MCF 10A (cell line): ENCODE measurements at regions of chr11 and their contacts with region 1.

Region 1: GRCh38 chr11:86931548-86932258 is 23.5 kb downstream of the FZD4 start:
- DNase-seq: peak; percentile 61
- H3K4me3 Mint-ChIP-seq: no peak overlapping the region
- H3K27ac Mint-ChIP-seq: no peak overlapping the region
- H3K4me1 Mint-ChIP-seq: peaks cover 12% of the 10 kb centered on the region
- H3K27me3 Mint-ChIP-seq: no peaks in the 10 kb centered on the region
- CTCF ChIP-seq: no peak

Region 2: DNA sequence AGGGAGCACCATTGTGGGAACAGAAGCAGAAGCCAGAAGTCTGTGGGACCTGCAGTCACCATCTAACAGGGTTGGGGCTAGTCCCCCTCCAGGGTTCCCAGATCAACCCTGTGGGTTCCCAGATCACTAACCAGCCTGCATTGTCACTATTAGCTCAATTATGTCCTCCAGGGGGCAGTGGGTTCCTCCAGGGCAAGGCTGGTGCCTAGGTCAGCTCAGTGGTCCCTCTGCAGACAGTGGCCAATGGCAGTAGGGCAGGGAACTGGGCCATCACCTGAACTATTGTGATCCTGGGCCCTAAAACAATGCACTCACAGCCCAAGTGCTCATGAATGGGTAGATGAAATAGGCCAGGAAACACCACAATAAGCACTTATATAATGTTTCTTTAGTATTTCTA is 150.2 kb before region 1 on chr11:
- CTCF ChIA-PET with region 1: no interaction called
- POLR2A ChIA-PET with region 1: no interaction called
- intact Hi-C with region 1: no loop called
- DNase-seq: no peak
- H3K4me3 Mint-ChIP-seq: no peak overlapping the region
- H3K27ac Mint-ChIP-seq: no peak overlapping the region
- H3K4me1 Mint-ChIP-seq: peaks cover 17% of the 10 kb centered on the region
- H3K27me3 Mint-ChIP-seq: no peaks in the 10 kb centered on the region
- CTCF ChIP-seq: no peak

Region 3: DNA sequence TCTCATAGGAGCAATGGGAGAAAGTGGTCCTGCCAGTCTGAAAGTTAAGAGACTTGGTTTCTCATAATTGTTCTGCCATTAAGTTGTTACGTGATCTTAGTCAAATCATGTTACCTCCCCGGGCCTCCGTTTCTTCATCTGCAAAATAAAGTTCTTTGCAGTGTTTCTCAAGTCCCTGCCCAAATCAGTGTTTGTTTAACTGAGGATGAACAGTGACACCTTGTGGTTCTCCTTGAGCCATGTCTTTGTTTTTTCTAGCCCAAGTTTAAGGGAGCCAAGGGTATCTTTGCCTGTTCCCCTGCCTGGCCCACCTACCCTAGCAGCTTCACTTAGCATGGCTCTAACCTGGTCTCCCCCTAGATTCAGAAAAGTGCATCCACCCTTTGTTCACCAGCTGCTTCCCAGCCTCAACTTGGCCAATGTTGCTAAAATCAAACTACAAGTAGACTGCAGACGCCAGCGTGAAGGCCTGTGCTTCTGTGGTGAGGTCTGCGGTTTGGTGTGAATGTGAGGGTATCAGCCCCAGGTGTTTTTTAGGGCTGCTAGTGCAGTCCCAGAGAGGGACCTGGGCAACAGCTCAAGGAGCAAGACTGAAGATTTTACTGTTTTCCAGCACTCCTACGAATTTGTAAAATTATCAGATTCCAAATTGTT is 12.0 kb before region 1 on chr11:
- CTCF ChIA-PET with region 1: interaction called, 21 read pairs
- POLR2A ChIA-PET with region 1: no interaction called
- intact Hi-C with region 1: no loop called
- DNase-seq: peak; percentile 68
- H3K4me3 Mint-ChIP-seq: no peak overlapping the region
- H3K27ac Mint-ChIP-seq: no peak overlapping the region
- H3K4me1 Mint-ChIP-seq: peaks cover 19% of the 10 kb centered on the region
- H3K27me3 Mint-ChIP-seq: no peaks in the 10 kb centered on the region
- CTCF ChIP-seq: peak; percentile 69

Region 4: GRCh38 chr11:86947541-86947940 is 15.8 kb after region 1 on chr11:
- CTCF ChIA-PET with region 1: no interaction called
- POLR2A ChIA-PET with region 1: no interaction called
- intact Hi-C with region 1: no loop called
- DNase-seq: no peak
- H3K4me3 Mint-ChIP-seq: no peak overlapping the region
- H3K27ac Mint-ChIP-seq: no peak overlapping the region
- H3K4me1 Mint-ChIP-seq: no peaks in the 10 kb centered on the region
- H3K27me3 Mint-ChIP-seq: no peaks in the 10 kb centered on the region
- CTCF ChIP-seq: no peak